ENCODE measurements at regions of chr11 and their contacts with region 1.

Region 1: GRCh38 chr11:65418711-65419459 is 3.7 kb upstream of the NEAT1 start:
- DNase-seq: peak; percentile 85 to 99 (median 89)
- ATAC-seq: peak; percentile 57
- H3K4me3 ChIP-seq: peak overlapping the region; percentile 43
- H3K27ac ChIP-seq: peak overlapping the region; percentile 98
- H3K4me1 ChIP-seq: peaks cover 51 to 75% of the 10 kb centered on the region in 2 experiments
- H3K27me3 ChIP-seq: no peaks in the 10 kb centered on the region
- CTCF ChIP-seq: no peak
- EP300 ChIP-seq: peak; percentile 70
- POLR2A ChIP-seq: peak; percentile 90
- RAD21 ChIP-seq: peak in 1 of 2 experiments; percentile 28; a peak in 1 of 4 replicates

Region 2: DNA sequence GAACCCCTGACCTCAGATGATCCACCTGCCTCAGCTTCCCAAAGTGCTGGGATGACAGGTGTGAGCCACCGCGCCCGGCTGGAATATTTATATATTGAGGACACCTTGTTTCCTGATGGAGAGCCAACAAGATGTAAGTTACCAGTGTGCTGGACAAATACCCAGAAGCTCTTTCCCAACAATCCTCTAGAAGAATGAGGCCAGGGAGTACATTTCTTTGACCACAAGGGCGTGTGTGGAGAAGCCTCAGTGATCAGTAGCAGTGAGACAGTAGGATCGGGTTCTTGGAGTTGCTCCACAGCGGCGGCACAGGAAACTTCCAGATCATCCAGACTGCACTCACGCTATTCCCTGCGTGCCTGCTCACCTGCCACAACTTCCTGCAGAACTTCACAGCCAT is 167.4 kb before region 1 on chr11:
- CTCF ChIA-PET with region 1: no interaction called
- POLR2A ChIA-PET with region 1: no interaction called
- in situ Hi-C with region 1: no loop called
- intact Hi-C with region 1: no loop called
- DNase-seq: no peak
- ATAC-seq: no peak
- H3K4me3 ChIP-seq: no peak overlapping the region
- H3K27ac ChIP-seq: no peak overlapping the region
- H3K4me1 ChIP-seq: no peaks in the 10 kb centered on the region; a peak in 1 of 5 replicates
- H3K27me3 ChIP-seq: no peaks in the 10 kb centered on the region
- CTCF ChIP-seq: no peak
- EP300 ChIP-seq: no peak
- POLR2A ChIP-seq: no peak
- RAD21 ChIP-seq: no peak

Region 3: DNA sequence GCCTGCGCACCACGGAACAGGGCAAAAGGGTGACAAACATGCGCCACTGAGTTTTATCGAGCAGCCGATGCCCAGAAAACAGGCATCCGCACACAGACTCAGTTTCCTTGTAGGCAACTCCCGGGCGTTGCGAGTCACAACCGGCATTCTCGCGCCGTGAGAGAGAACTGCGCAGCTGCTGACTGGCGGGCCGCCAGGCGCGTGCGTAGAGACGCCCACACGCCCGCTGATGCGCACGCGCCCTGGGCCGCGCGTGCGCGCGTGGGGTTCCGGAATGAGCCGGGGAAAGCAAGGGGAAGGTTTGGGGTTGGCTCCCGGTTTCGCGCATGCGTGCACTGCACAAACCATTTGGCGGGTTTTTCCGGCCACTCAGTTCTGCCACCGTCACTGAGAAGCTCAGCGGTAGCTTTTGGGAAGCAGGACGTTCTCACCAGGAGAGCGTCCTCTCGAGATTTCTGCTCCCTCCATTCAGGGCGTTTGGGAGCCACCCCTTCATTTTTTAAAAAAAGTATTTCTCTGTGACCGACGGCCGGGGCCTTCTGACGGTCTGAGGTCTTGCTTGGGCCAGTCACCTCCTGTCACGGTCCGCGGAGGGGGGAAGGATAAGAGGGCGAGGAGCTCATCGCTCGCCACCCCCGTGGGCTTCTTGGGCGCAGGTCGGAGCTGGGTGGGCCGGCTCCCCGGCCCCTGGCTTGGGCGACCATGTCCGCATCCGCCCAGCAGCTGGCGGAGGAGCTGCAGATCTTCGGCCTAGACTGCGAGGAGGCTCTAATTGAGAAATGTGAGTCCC is 157.1 kb before region 1 on chr11 and contains the start of gene POLA2:
- CTCF ChIA-PET with region 1: no interaction called
- POLR2A ChIA-PET with region 1: interaction called, 18 read pairs
- in situ Hi-C with region 1: no loop called
- intact Hi-C with region 1: no loop called
- DNase-seq: peak; percentile 98 to 100 (median 100)
- ATAC-seq: peak; percentile 92
- H3K4me3 ChIP-seq: peak within 1 kb of the TSS; percentile 65
- H3K27ac ChIP-seq: peak within 1 kb of the TSS; percentile 83
- H3K4me1 ChIP-seq: peaks cover 9 to 23% of the 10 kb centered on the region in 2 experiments; a peak in 4 of 5 replicates
- H3K27me3 ChIP-seq: no peaks in the 10 kb centered on the region
- CTCF ChIP-seq: no peak
- EP300 ChIP-seq: no peak
- POLR2A ChIP-seq: peak; percentile 96
- RAD21 ChIP-seq: no peak
- polyA plus RNA-seq, gene POLA2: 2.7 to 5.6 TPM

Region 4: GRCh38 chr11:65354265-65355012 is 64.4 kb before region 1 on chr11 and contains the start of gene TIGD3:
- CTCF ChIA-PET with region 1: no interaction called
- POLR2A ChIA-PET with region 1: interaction called, 67 read pairs
- in situ Hi-C with region 1: no loop called
- intact Hi-C with region 1: no loop called
- DNase-seq: peak; percentile 98 to 99 (median 99)
- ATAC-seq: peak; percentile 95
- H3K4me3 ChIP-seq: peak within 1 kb of the TSS; percentile 63
- H3K27ac ChIP-seq: peak within 1 kb of the TSS; percentile 66
- H3K4me1 ChIP-seq: peaks cover 25 to 48% of the 10 kb centered on the region in 2 experiments
- H3K27me3 ChIP-seq: no peaks in the 10 kb centered on the region
- CTCF ChIP-seq: 0 out of 6 replicates have a peak, but pooled peaks of 1 of the 3 experiments have one; percentile 2
- EP300 ChIP-seq: no peak
- POLR2A ChIP-seq: peak; percentile 42; the same call in 1 of the 2 replicates
- RAD21 ChIP-seq: no peak
- polyA plus RNA-seq, gene TIGD3: 0.06 to 0.08 TPM

Region 5: DNA sequence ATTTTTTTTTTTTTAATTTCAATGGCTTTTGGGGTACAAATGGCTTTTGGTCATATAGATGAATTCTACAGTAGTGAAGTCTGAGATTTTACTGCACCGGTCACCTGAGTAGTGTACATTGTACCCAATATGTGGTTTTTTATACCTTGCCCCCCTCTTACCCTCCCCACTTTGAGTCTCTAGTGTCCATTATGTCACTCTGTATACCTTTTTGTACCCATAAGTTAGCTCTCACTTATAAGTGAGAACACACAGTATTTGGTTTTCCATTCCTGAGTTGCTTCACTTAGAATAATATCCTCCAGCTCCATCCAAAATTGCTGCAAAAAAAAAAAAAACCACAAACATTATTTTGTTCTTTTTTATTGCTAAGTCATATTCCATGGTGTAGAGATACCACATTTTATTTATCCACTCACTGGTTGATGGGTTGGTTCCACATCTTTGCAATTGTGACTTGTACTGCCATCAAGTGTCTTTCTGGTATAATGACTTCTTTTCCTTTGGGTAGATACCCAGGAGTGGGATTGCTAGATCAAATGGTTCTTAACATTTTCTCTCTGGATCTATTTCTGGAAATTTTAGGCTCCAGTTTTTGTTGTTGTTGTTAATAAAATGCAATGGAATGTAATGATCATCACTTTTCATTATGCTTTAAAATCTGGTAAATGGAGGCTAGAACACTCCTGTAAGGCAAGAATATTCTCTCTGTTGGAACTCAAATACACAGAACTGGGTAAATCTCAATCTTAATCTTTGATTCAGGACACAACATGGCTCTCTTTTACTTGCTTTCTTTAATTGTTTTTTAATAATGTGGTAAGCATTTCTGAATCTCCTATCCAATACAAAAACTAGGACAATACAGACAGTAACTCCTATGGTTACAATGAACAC is 14.0 kb after region 1 on chr11:
- CTCF ChIA-PET with region 1: interaction called, 8 read pairs
- POLR2A ChIA-PET with region 1: interaction called, 63 read pairs
- in situ Hi-C with region 1: no loop called
- intact Hi-C with region 1: loop called (anchors 1 kb)
- DNase-seq: peak in 1 of 4 experiments; percentile 62
- ATAC-seq: no peak
- H3K4me3 ChIP-seq: no peak overlapping the region
- H3K27ac ChIP-seq: no peak overlapping the region
- H3K4me1 ChIP-seq: peaks cover 3 to 29% of the 10 kb centered on the region in 2 experiments; a peak in 4 of 5 replicates
- H3K27me3 ChIP-seq: no peaks in the 10 kb centered on the region
- CTCF ChIP-seq: peak; percentile 27 to 61 (median 32); a peak in 3 of 6 replicates
- EP300 ChIP-seq: no peak
- POLR2A ChIP-seq: peak; percentile 64
- RAD21 ChIP-seq: peak; percentile 59 to 71

Region 6: GRCh38 chr11:65471410-65471762 is 52.5 kb after region 1 on chr11:
- CTCF ChIA-PET with region 1: interaction called, 6 read pairs
- POLR2A ChIA-PET with region 1: interaction called, 704 read pairs
- in situ Hi-C with region 1: no loop called
- intact Hi-C with region 1: loop called (anchors 1 kb)
- DNase-seq: peak; percentile 63 to 91 (median 77)
- ATAC-seq: peak; percentile 88
- H3K4me3 ChIP-seq: peak overlapping the region; percentile 42
- H3K27ac ChIP-seq: peak overlapping the region; percentile 96
- H3K4me1 ChIP-seq: peaks cover 38 to 55% of the 10 kb centered on the region in 2 experiments
- H3K27me3 ChIP-seq: no peaks in the 10 kb centered on the region
- CTCF ChIP-seq: peak; percentile 81 to 94 (median 94)
- EP300 ChIP-seq: no peak
- POLR2A ChIP-seq: no peak
- RAD21 ChIP-seq: peak; percentile 76 to 91

Region 7: GRCh38 chr11:65524741-65525545 is 106.1 kb after region 1 on chr11 and contains the start of gene SCYL1:
- CTCF ChIA-PET with region 1: no interaction called
- POLR2A ChIA-PET with region 1: interaction called, 36 read pairs
- in situ Hi-C with region 1: no loop called
- intact Hi-C with region 1: no loop called
- DNase-seq: peak; percentile 74 to 96 (median 95)
- ATAC-seq: peak; percentile 87
- H3K4me3 ChIP-seq: peak within 1 kb of the TSS; percentile 100
- H3K27ac ChIP-seq: peak within 1 kb of the TSS; percentile 90
- H3K4me1 ChIP-seq: peaks cover 38 to 48% of the 10 kb centered on the region in 2 experiments
- H3K27me3 ChIP-seq: no peaks in the 10 kb centered on the region
- CTCF ChIP-seq: no peak
- EP300 ChIP-seq: no peak
- POLR2A ChIP-seq: peak; percentile 67
- RAD21 ChIP-seq: no peak
- polyA plus RNA-seq, gene SCYL1: 1.9 to 4.7 TPM

Region 8: GRCh38 chr11:65575568-65576231 is 156.8 kb after region 1 on chr11 and contains the start of gene EHBP1L1:
- CTCF ChIA-PET with region 1: no interaction called
- POLR2A ChIA-PET with region 1: interaction called, 25 read pairs
- in situ Hi-C with region 1: no loop called
- intact Hi-C with region 1: no loop called
- DNase-seq: peak; percentile 81 to 93 (median 91)
- ATAC-seq: peak; percentile 45
- H3K4me3 ChIP-seq: peak within 1 kb of the TSS; percentile 88
- H3K27ac ChIP-seq: peak within 1 kb of the TSS; percentile 89
- H3K4me1 ChIP-seq: peaks cover 57 to 93% of the 10 kb centered on the region in 2 experiments
- H3K27me3 ChIP-seq: no peaks in the 10 kb centered on the region; a peak in 1 of 5 replicates
- CTCF ChIP-seq: no peak
- EP300 ChIP-seq: no peak
- POLR2A ChIP-seq: peak; percentile 61
- RAD21 ChIP-seq: no peak
- polyA plus RNA-seq, gene EHBP1L1: 0.03 to 0.38 TPM

Region 9: DNA sequence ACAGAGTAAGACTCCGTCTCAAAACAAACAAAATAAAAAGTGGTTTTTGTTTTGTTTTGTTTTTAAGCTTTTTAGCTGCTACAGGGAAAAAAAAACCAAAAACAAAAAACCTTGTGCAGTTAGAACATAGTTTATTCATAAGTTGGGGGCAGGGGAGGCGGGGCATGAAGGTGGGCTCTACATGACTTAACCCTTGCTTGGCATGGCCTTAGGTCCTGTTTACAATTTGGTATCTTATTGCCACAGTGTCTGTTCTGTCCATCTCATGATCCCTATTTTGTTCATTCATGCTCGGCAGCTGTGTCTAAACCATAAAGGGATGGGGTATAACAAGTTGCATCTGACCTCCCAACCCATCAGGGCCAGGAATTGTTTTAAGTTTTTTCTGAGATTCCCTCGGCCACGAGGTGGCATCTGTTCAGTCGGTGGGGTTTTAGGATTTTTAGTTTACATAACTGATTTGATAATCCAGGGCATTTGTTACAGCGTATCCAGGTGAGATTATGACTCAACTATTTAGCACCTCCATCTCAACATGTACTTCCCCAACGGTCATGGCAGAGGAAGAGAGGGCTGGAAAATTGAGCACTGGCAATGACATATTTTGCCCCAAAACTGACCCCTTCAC is 355.0 kb after region 1 on chr11:
- CTCF ChIA-PET with region 1: no interaction called
- POLR2A ChIA-PET with region 1: no interaction called
- in situ Hi-C with region 1: no loop called
- intact Hi-C with region 1: no loop called
- DNase-seq: no peak
- ATAC-seq: no peak
- H3K4me3 ChIP-seq: no peak overlapping the region
- H3K27ac ChIP-seq: no peak overlapping the region
- H3K4me1 ChIP-seq: peaks cover 0 to 14% of the 10 kb centered on the region in 2 experiments; a peak in 2 of 5 replicates
- H3K27me3 ChIP-seq: no peaks in the 10 kb centered on the region
- CTCF ChIP-seq: peak in 2 of 3 experiments; percentile 2 to 14; a peak in 1 of 6 replicates
- EP300 ChIP-seq: no peak
- POLR2A ChIP-seq: no peak
- RAD21 ChIP-seq: no peak

Region 10: DNA sequence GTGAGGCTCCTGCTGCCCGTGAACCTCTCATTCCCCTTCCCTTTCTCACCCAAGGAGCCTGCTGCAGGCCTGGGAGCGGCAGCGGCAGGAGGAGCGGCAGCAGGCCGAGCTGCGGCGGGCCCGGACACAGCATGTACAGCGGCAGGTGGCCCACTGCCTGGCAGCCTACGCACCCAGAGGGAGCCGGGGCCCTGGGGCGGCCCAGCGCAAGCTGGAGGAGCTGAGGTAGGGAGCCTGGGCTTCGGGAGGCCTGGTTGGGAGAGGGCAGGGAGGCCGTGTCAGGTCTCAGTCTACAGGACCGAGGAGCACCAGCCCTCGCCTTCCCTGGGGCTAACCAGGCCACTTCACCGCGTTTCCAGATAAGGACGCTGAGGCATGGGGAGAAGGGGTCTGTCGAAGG is 534.6 kb after region 1 on chr11:
- CTCF ChIA-PET with region 1: no interaction called
- POLR2A ChIA-PET with region 1: no interaction called
- in situ Hi-C with region 1: no loop called
- intact Hi-C with region 1: no loop called
- DNase-seq: no peak
- ATAC-seq: no peak; the same call in 2 of the 3 replicates
- H3K4me3 ChIP-seq: no peak overlapping the region
- H3K27ac ChIP-seq: no peak overlapping the region
- H3K4me1 ChIP-seq: peaks cover 0 to 8% of the 10 kb centered on the region in 2 experiments; a peak in 3 of 5 replicates
- H3K27me3 ChIP-seq: no peaks in the 10 kb centered on the region
- CTCF ChIP-seq: no peak
- EP300 ChIP-seq: no peak
- POLR2A ChIP-seq: no peak
- RAD21 ChIP-seq: no peak